Naive thymus-derived CD4-positive, alpha-beta T cell (primary cell): ENCODE measurements at regions of chr1 and their contacts with region 1.

Region 1: GRCh38 chr1:15323351-15323988 is 76.4 kb downstream of the FHAD1 start:
- DNase-seq: peak; percentile 38 to 70 (median 60)
- ATAC-seq: peak; percentile 98
- H3K4me3 ChIP-seq: no peak overlapping the region
- H3K4me3 Mint-ChIP-seq: no peak overlapping the region
- H3K27ac ChIP-seq: no peak overlapping the region
- H3K27ac Mint-ChIP-seq: no peak overlapping the region
- H3K4me1 ChIP-seq: no peaks in the 10 kb centered on the region
- H3K4me1 Mint-ChIP-seq: peaks cover 0 to 7% (median 0%) of the 10 kb centered on the region in 7 donors
- H3K27me3 ChIP-seq: no peaks in the 10 kb centered on the region
- H3K27me3 Mint-ChIP-seq: peaks cover 0 to 29% (median 5%) of the 10 kb centered on the region in 5 donors

Region 2: GRCh38 chr1:15206418-15207030 is 116.9 kb before region 1 on chr1:
- CTCF ChIA-PET with region 1: no interaction called
- POLR2A ChIA-PET with region 1: no interaction called
- intact Hi-C with region 1: no loop called
- DNase-seq: no peak
- ATAC-seq: no peak
- H3K4me3 ChIP-seq: no peak overlapping the region
- H3K4me3 Mint-ChIP-seq: no peak overlapping the region
- H3K27ac ChIP-seq: no peak overlapping the region
- H3K27ac Mint-ChIP-seq: no peak overlapping the region
- H3K4me1 ChIP-seq: no peaks in the 10 kb centered on the region
- H3K4me1 Mint-ChIP-seq: peaks cover 0 to 2% (median 0%) of the 10 kb centered on the region in 7 donors
- H3K27me3 ChIP-seq: no peaks in the 10 kb centered on the region
- H3K27me3 Mint-ChIP-seq: peaks cover 0 to 23% (median 9%) of the 10 kb centered on the region in 5 donors

Region 3: GRCh38 chr1:15364740-15365139 is 41.3 kb after region 1 on chr1:
- CTCF ChIA-PET with region 1: no interaction called
- POLR2A ChIA-PET with region 1: no interaction called
- intact Hi-C with region 1: loop called in 1 of 2 experiments (anchors 5 kb)
- DNase-seq: no peak
- ATAC-seq: peak; percentile 45
- H3K4me3 ChIP-seq: no peak overlapping the region
- H3K4me3 Mint-ChIP-seq: no peak overlapping the region
- H3K27ac ChIP-seq: no peak overlapping the region
- H3K27ac Mint-ChIP-seq: peak overlapping the region in 1 of 9 donors; percentile 51
- H3K4me1 ChIP-seq: no peaks in the 10 kb centered on the region
- H3K4me1 Mint-ChIP-seq: peaks cover 0 to 4% (median 0%) of the 10 kb centered on the region in 7 donors
- H3K27me3 ChIP-seq: no peaks in the 10 kb centered on the region
- H3K27me3 Mint-ChIP-seq: peaks cover 0 to 20% (median 0%) of the 10 kb centered on the region in 5 donors

Region 4: DNA sequence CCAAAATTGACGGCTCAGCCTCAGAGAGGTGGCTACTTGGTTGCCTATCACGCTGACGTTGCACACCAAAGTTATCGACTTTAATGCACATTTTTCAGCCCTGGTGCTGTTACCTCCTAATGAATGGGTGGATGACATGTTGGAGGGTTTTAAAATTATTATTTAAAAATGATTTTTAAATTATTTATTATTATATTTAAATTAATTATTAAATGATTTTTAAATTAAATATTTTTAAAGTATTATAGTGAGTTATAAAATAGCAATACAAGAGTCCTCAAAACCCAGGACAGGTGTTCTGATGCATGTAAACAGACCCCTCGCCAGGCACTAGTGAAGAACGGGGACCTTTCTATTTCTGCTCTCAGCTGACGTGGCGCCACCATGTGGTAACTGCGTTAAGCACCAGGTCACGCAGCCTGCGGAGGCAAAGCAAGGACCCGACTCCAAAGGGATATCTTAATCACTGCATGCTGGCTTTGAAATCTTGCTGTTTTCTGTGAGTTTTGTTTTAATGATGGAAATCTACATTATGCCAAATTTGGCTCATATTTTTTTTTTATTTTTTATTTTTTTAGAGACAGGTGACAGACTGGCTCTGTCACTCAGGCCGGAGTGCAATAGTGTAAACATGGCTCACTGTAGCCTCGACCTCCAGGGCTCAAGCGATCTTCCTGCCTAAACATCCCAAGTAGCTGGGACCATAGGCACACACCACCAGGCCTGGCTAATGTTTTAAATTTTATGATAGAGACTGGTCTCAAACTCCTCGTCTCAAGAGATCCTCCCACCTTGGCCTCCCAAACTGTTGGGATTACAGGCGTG is 177.9 kb after region 1 on chr1:
- CTCF ChIA-PET with region 1: no interaction called
- POLR2A ChIA-PET with region 1: no interaction called
- intact Hi-C with region 1: loop called in 1 of 2 experiments (anchors 5 kb)
- DNase-seq: peak in 5 of 9 donors; percentile 8 to 45 (median 13)
- ATAC-seq: peak; percentile 71
- H3K4me3 ChIP-seq: no peak overlapping the region
- H3K4me3 Mint-ChIP-seq: no peak overlapping the region
- H3K27ac ChIP-seq: no peak overlapping the region
- H3K27ac Mint-ChIP-seq: no peak overlapping the region
- H3K4me1 ChIP-seq: no peaks in the 10 kb centered on the region
- H3K4me1 Mint-ChIP-seq: no peaks in the 10 kb centered on the region
- H3K27me3 ChIP-seq: no peaks in the 10 kb centered on the region
- H3K27me3 Mint-ChIP-seq: no peaks in the 10 kb centered on the region